ENCODE measurements at regions of chrX and their contacts with region 1.

Region 1: DNA sequence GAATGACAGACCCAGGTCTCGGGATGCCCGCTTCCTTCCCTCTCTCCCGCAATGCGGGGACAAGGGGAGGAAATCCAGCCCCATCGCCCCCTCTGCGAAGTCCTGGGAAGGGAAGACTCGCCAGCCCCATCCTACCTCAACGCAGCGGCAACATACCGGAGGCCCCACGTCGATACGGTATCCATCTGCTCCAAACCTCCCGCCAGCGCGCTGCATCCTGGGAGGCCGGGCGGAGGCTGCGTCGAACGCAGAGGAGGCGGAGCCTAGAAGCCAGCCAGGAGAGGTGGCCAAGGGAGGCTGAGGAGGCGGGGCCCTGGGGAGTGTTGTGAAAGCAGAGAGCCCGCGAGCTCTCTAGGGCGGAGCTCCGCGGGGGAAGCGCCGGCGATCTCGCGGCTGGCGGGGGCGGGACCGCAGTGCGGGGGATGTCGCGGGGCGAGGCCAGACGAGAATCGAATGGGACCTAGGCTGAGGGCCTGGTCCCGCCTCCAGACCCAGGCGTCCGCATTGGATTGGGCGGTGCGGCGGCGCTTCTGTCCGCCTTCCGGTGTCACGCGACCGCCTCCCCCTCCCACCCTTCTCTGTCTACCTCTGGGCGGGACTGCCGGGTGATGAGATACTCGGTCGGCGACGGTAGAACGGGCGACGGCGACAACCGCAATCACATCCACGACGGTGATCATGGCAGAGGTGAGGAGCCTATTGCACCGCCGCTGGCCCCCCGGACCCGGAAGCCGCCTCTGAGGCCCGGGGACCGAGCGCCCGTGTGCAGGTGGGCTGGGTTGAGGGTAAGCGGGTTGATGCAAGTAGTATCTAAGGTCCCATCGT is at the starts of genes FANCB and MOSPD2:
- DNase-seq: peak; percentile 95
- ATAC-seq: peak; percentile 96
- H3K4me3 Mint-ChIP-seq: peak within 1 kb of the TSS; percentile 78
- H3K27ac Mint-ChIP-seq: peak within 1 kb of the TSS; percentile 76
- H3K4me1 Mint-ChIP-seq: peaks cover 17% of the 10 kb centered on the region
- H3K27me3 Mint-ChIP-seq: no peaks in the 10 kb centered on the region
- total RNA-seq, gene FANCB: 14.7 to 15.4 TPM
- total RNA-seq, gene MOSPD2: 18.9 to 24.5 TPM

Region 2: DNA sequence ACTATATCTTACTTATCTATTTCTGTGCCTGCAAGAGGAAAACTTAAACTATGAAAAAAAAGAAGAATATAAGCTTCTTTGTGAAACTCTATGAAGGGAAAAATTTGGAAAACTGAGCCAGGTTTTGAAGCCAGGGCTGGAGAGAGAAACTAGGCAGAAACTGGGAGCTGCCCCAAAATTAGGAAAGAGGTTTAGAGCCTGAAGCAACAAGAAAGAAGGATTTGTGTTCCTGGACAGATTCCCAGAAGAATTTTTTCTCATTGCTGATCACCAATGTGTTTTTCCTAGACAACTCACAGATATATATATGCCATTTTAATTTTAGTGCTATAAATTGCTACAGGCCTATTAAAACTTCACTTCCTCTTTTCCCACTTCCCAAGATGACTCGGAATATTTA is 598.4 kb before region 1 on chrX:
- CTCF ChIA-PET with region 1: no interaction called
- POLR2A ChIA-PET with region 1: no interaction called
- intact Hi-C with region 1: no loop called
- DNase-seq: no peak
- ATAC-seq: no peak
- H3K4me3 Mint-ChIP-seq: no peak overlapping the region
- H3K27ac Mint-ChIP-seq: no peak overlapping the region
- H3K4me1 Mint-ChIP-seq: no peaks in the 10 kb centered on the region
- H3K27me3 Mint-ChIP-seq: no peaks in the 10 kb centered on the region

Region 3: DNA sequence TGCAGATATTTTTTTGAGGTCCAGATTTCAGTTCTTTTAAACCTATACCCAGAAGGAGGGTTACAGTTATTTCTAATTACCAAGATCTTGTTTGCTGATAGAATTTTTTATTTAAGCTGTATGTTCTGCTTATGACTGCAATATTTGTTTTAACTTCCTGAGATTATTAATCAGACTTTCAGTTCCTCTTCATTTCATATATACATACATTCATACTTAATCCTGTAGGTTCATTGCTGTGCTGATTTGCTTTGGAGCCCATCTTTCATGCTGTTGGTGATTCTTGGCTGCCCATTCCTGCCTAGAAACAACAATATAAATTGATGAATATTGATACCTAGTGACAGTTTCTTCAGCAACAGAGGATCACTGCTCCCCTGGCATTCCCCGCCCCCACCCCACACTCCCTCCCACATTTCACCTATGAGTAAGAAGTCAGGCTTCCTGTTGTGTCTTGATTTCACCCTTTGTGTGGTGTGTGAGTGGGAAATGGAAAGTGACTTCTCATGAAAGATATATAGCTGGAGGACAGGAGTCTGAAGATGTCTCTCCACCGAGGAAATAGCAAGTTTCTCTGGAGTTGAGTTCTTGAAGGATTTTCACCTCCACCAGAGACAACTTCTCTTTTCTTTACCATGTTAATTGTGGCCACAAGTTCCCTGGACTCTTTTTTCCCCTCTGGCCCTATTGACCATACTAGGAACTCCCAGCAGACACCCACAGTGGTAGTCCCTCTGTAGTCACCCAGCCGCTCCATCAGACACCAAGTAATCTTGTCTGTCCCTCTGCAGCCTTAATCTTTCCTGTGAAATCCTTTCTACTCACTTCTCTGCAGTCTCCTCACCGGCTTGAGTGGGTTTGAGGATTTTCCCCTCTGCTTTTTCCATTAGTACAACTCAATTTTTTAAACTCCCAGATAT is 278.5 kb after region 1 on chrX:
- CTCF ChIA-PET with region 1: no interaction called
- POLR2A ChIA-PET with region 1: no interaction called
- intact Hi-C with region 1: loop called in 1 of 2 experiments (anchors 10 kb)
- DNase-seq: peak; percentile 56
- ATAC-seq: peak; percentile 92
- H3K4me3 Mint-ChIP-seq: no peak overlapping the region
- H3K27ac Mint-ChIP-seq: peak overlapping the region; percentile 70
- H3K4me1 Mint-ChIP-seq: peaks cover 16% of the 10 kb centered on the region
- H3K27me3 Mint-ChIP-seq: peaks cover 14% of the 10 kb centered on the region

Region 4: DNA sequence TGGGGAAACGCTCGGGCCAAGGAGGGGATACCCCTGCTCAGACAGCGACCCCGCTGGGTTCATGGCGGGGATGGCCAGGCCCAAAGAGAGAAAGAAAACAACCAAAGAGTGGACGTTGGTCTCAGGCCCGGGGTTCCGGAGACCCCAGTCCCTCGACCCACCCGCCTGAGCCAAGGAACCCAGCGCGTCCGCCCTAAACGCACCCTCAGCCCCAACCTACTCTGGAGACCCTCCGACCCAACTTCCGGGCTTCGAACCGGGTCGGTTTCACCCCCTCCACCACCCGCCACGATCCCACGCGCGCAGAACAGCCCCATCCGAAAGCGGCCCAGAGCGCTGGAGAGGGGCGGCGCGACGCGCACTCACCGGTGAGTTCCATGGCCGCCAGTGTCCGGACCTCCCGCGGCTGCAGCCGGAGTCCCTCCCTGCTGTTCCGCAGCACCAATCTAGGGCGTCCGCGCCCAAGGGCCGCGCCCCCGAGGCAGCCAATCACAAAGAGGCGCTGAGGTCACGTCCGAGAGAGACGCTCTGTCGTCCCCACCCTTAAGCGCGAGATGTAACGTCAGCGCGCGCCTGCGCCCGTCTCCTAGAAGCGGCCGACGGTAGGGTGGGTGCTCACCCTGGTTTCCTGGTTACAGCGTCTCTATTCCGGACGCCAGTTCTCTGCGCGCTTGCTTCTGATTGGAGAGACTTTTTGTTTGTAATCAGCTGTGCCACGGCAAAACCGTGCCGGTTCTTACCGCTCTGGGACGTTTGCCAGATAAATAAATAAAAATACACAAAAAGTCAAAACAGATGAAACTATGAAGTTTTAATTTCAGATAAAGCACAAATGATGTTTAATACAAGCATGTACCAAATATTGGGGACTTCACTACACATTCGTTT is 462.3 kb after region 1 on chrX and contains the start of gene PIGA:
- CTCF ChIA-PET with region 1: no interaction called
- POLR2A ChIA-PET with region 1: no interaction called
- intact Hi-C with region 1: loop called (anchors 2 to 10 kb)
- DNase-seq: peak; percentile 94
- ATAC-seq: peak; percentile 97
- H3K4me3 Mint-ChIP-seq: peak within 1 kb of the TSS; percentile 84
- H3K27ac Mint-ChIP-seq: peak within 1 kb of the TSS; percentile 91
- H3K4me1 Mint-ChIP-seq: peaks cover 14% of the 10 kb centered on the region
- H3K27me3 Mint-ChIP-seq: peaks cover 4% of the 10 kb centered on the region
- total RNA-seq, gene PIGA: 37.2 to 37.9 TPM